Left cardiac atrium (tissue), 4 donors: ENCODE measurements at regions of chr2 and their contacts with region 1.

Region 1: GRCh38 chr2:1742681-1743395 is 1.5 kb downstream of the PXDN start:
- DNase-seq: peak; percentile 78
- ATAC-seq: peak; percentile 55 to 57

Region 2: GRCh38 chr2:1591978-1592907 is 150.6 kb before region 1 on chr2:
- intact Hi-C with region 1: loop called (anchors 5 to 10 kb)
- DNase-seq: peak; percentile 87
- ATAC-seq: peak; percentile 79 to 84

Region 3: DNA sequence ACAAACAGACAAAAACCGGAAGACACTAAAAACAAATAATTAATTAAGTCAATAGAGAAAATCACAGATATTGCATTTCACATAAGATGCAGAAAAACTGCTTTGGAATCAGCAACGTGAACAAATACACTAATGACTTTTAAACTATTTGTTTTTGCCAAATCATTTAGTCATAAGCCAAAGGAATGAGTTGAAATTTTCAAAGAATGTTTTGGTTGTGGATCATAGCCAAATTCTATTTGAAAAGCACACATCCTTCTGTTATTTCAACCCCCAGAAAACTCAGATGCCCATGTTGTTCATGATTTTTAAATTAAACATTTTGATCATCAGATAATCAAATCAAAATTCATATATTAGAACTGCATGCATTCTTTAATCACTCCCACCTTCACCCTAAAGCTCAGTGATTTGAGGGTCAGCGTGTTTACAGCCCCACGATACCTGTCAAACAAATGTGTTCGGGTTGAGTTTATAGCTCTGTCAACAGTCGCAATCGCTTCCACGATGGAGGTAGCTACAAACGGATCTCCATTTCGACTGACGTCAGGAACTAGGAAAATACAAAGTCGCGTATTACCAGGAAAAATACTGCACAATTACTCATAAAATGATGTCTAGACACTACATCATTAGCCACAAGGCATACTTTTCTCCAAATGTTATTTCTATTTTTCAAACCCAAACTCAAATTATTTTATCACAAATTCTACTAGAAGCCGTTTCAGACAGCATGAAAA is 88.7 kb before region 1 on chr2:
- intact Hi-C with region 1: loop called in 1 of 2 experiments (anchors 5 kb)
- DNase-seq: peak; percentile 20
- ATAC-seq: peak in 1 of 2 donors; percentile 38